Mammary epithelial cell (primary cell): ENCODE measurements at regions of chr6 and their contacts with region 1.

Region 1: DNA sequence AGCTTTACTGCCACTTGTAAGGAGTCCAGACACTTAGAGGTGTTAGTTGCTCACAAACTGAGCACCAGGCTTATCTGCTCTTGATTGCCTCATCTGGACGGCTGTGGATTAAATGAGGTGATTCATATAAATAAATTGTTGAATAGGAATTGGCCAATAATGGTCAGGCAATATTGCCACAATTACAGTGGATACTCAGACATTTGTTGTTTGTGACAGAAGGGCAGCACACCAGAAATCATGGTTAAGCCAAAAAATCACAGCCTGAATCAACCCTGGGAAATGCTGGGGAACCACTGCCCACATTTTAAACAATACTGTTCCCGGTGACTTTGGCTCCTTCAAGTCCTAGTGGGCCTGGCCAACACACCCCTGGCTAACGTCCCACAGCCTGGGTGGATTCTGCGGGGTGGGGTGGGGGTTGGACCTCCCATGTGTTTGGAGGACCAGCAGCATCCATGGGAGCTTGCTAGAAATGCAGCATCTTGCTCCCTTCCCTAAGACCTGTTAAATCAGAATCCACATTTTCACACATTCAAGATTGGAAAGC is 29.5 kb upstream of the SPDEF start:
- DNase-seq: peak; percentile 13
- H3K4me3 ChIP-seq: no peak overlapping the region
- H3K27ac ChIP-seq: no peak overlapping the region
- H3K4me1 ChIP-seq: no peaks in the 10 kb centered on the region
- H3K27me3 ChIP-seq: no peaks in the 10 kb centered on the region
- CTCF ChIP-seq: no peak

Region 2: DNA sequence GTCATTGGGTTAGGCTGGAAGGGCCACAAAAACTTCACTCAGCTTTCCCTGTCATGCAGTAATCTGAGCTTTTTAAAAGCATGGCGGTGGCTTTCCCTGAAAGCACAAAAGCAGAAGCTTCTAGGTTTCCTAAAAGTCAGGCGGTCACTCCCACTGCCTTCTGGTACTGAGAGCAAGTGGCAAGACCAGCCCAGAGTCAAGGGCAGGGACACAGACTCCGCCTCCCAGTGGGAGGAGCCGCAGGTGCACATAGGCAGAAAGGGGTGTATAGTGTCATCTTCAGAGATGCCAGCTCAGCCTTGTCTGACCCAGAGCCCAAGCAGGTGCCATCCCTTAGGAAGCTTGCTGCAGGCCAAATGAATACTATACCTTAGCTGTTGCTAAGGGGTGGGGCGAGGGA is 137.7 kb before region 1 on chr6:
- CTCF ChIA-PET with region 1: no interaction called
- dilution Hi-C with region 1: loop called (anchors 5 kb)
- in situ Hi-C with region 1: no loop called
- intact Hi-C with region 1: no loop called
- DNase-seq: no peak
- H3K4me3 ChIP-seq: no peak overlapping the region
- H3K27ac ChIP-seq: no peak overlapping the region
- H3K4me1 ChIP-seq: no peaks in the 10 kb centered on the region
- H3K27me3 ChIP-seq: no peaks in the 10 kb centered on the region
- CTCF ChIP-seq: no peak

Region 3: DNA sequence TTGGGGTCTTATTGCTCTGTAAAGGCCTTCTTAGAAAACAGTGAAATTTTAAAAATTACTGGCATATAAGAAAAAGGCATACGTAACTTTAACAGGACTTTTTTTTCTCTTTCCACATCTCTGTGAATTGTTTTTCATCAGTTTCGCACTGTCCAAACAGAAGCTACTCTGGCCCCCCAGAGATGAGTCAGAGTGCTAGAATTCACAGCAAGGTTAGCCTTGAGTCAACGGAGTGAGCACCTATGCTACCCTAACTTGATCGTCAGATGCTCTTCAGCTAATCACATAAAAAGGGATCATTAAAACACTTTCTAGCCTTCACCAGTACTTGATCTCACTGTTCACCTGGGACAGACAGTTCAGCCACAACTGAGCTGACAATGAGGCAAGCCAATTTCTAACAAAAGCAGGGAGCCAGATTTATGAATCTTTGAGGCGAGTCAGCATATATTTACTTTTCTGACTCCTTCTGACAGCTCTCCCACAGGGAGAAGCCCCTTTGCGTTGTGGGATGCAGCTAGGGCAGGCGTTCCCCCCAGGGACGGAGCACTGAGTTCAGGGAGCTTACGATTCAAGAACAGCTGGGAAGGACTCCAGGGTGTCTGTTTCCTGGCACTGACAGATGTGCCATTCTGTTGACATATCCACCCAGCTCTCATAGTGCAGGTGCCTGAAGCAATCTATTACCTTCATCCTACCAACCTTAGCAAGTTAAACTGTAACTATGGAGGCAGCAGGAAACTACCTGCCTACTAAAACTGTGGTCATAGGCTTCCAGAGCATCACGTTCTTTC is 16.9 kb after region 1 on chr6:
- CTCF ChIA-PET with region 1: no interaction called
- dilution Hi-C with region 1: no loop called
- in situ Hi-C with region 1: no loop called
- intact Hi-C with region 1: no loop called
- DNase-seq: no peak
- H3K4me3 ChIP-seq: no peak overlapping the region
- H3K27ac ChIP-seq: no peak overlapping the region
- H3K4me1 ChIP-seq: peaks cover 6% of the 10 kb centered on the region
- H3K27me3 ChIP-seq: no peaks in the 10 kb centered on the region
- CTCF ChIP-seq: no peak

Region 4: GRCh38 chr6:34757687-34758274 is 172.2 kb after region 1 on chr6:
- CTCF ChIA-PET with region 1: no interaction called
- dilution Hi-C with region 1: no loop called
- in situ Hi-C with region 1: no loop called
- intact Hi-C with region 1: no loop called
- DNase-seq: no peak
- H3K4me3 ChIP-seq: peak overlapping the region; percentile 73 to 100 (median 100)
- H3K27ac ChIP-seq: peak overlapping the region; percentile 94
- H3K4me1 ChIP-seq: peaks cover 5% of the 10 kb centered on the region
- H3K27me3 ChIP-seq: no peaks in the 10 kb centered on the region
- CTCF ChIP-seq: no peak